Activated T-helper 2 cell treated with anti-CD3 and anti-CD28 coated beads, Interferon-gamma antibody, Interleukin-2, Interleukin-4, amounts not matched to agents 10 μg/mL and 5 μg/mL and 100 μg/mL, durations not matched to agents 14 hours and 24 hours and 36 hours (primary cell): ENCODE measurements at regions of chr15 and their contacts with region 1.

Region 1: GRCh38 chr15:82046666-82047452 is 1.0 kb upstream of the MEX3B start:
- DNase-seq: peak; percentile 86
- H3K4me3 Mint-ChIP-seq: peak overlapping the region; percentile 89
- H3K27ac Mint-ChIP-seq: peak overlapping the region; percentile 89
- H3K4me1 Mint-ChIP-seq: peaks cover 7% of the 10 kb centered on the region
- H3K27me3 Mint-ChIP-seq: peaks cover 42% of the 10 kb centered on the region

Region 2: DNA sequence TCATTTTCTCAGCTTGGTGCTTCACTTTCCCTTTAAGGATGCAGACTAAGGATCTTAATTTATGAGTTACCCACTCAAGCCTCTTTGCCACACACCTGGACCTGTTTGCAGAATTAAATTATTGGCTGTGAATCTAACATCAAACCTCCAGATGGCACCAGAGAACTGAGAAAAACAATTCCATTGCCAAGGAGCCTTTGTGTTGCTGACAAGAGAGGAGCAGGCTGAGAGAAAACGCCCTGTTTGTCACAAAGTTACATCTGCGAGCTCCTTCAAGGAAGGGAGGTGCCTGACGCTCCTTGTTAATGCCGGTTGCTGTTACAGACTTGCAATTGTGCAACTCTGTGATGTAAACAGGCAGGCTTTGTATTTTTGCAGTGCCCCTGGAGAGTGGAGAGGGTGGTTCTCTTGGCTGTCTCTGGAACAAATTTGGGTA is 636.5 kb before region 1 on chr15:
- intact Hi-C with region 1: loop called (anchors 10 kb)
- DNase-seq: no peak
- H3K4me3 Mint-ChIP-seq: no peak overlapping the region
- H3K27ac Mint-ChIP-seq: no peak overlapping the region
- H3K4me1 Mint-ChIP-seq: peaks cover 12% of the 10 kb centered on the region
- H3K27me3 Mint-ChIP-seq: peaks cover 27% of the 10 kb centered on the region

Region 3: GRCh38 chr15:81480645-81481053 is 566.2 kb before region 1 on chr15:
- intact Hi-C with region 1: loop called (anchors 5 kb)
- DNase-seq: no peak
- H3K4me3 Mint-ChIP-seq: no peak overlapping the region
- H3K27ac Mint-ChIP-seq: no peak overlapping the region
- H3K4me1 Mint-ChIP-seq: no peaks in the 10 kb centered on the region
- H3K27me3 Mint-ChIP-seq: peaks cover 6% of the 10 kb centered on the region

Region 4: GRCh38 chr15:82072926-82073537 is 26.2 kb after region 1 on chr15:
- intact Hi-C with region 1: no loop called
- DNase-seq: no peak
- H3K4me3 Mint-ChIP-seq: no peak overlapping the region
- H3K27ac Mint-ChIP-seq: no peak overlapping the region
- H3K4me1 Mint-ChIP-seq: no peaks in the 10 kb centered on the region
- H3K27me3 Mint-ChIP-seq: peaks cover 8% of the 10 kb centered on the region